ENCODE measurements at regions of chr4 and their contacts with region 1.

Region 1: DNA sequence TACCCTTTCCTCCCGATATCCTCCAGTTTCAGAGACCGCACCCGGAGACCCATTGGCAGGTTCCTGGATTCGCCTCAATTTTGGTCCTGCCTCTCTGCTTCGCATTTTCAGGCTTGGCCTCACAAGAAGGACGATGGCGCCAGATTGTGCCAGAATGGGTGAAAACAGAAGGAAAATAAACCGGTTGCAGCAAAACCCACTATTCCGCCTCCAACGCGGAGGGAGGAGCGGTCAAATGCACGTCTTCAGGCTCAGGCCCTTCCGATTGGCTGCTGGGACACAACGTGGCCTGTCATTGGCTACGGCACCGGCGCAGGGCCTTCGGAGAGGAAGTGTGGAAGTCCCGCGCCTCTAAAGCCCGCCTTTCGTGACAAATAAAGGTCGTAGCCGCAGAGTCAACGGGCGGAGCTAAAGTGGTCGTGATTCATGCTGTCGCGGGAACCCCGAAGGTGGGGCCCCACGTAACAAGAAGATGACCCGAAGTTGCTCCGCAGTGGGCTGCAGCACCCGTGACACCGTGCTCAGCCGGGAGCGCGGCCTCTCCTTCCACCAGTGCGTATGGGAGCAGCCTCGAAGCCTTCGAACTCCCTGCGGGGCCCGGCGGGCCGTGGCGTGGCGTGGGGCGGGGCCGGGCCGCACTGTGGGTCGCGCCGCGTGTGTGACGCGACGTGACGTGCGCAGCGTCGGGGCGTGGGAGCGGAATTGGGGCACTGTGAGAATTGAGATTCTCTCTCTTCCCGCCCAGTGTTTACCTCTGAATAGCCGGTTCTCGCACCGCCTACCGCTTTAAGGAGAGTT is at the start of gene THAP9:
- DNase-seq: peak; percentile 97 to 99
- H3K4me3 ChIP-seq: peak within 1 kb of the TSS; percentile 69 to 78
- H3K27ac ChIP-seq: peak within 1 kb of the TSS; percentile 98
- H3K4me1 ChIP-seq: peaks cover 0 to 20% of the 10 kb centered on the region in 2 donors
- H3K27me3 ChIP-seq: no peaks in the 10 kb centered on the region
- CTCF ChIP-seq: no peak
- total RNA-seq, gene THAP9: 0.32 TPM

Region 2: DNA sequence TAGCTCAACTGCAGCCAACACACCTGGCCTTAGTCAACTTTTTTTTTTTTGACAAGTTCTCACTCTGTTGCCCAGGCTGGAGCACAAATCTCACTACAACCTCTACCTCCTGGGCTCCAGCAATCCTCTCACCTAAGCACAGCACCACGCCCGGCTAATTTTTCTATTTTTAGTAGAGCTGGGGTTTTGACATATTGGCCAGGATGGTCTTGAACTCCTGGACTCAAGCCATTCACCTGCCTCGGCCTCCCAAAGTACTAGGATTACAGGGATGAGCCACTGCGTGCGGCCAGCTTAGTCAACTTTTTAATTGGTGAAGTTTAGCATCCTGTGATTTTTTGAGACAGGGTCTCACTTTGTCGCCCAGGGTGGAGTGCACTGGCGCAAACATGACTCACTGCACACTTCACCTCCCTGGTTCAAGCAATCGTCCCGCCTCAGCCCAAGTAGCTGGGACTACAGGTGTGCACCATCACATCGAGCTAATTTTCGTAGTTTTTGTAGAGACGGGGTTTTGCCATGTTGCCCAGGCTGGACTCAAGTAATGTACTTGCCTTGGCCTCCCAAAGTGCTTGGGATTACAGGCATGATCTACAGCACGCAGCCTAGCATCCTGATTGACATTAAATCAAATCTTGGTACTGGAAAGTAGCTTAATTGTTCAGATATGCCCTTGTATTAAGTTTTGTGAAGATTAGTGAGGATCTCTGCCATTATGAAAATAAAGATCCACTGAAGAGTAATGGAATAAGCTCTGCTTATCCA is 478.6 kb before region 1 on chr4:
- intact Hi-C with region 1: no loop called
- DNase-seq: no peak
- H3K4me3 ChIP-seq: no peak overlapping the region
- H3K27ac ChIP-seq: no peak overlapping the region
- H3K4me1 ChIP-seq: peaks cover 0 to 10% of the 10 kb centered on the region in 2 donors
- H3K27me3 ChIP-seq: no peaks in the 10 kb centered on the region
- CTCF ChIP-seq: no peak

Region 3: DNA sequence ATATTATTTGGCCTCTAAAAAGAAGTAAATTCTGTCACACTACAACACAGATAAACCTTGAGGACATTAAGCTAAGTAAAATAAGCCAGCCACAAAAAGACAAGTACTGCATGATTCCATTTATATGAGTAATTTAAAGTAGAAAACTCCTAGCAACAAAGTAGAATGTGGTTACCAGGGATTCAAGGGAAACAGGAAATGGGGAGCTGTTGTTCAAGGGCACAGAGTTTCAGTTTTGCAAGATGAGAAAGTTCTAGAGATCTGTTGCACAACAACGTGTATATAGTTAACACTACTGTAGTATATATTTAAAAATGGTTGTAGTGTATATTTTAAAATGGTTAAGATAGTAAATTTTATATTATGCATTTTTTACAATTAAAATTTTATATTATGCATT is 34.9 kb before region 1 on chr4:
- intact Hi-C with region 1: loop called (anchors 5 kb)
- DNase-seq: no peak
- H3K4me3 ChIP-seq: no peak overlapping the region
- H3K27ac ChIP-seq: peak overlapping the region; percentile 50 to 75
- H3K4me1 ChIP-seq: peaks cover 4 to 11% of the 10 kb centered on the region in 2 donors
- H3K27me3 ChIP-seq: no peaks in the 10 kb centered on the region
- CTCF ChIP-seq: no peak

Region 4: DNA sequence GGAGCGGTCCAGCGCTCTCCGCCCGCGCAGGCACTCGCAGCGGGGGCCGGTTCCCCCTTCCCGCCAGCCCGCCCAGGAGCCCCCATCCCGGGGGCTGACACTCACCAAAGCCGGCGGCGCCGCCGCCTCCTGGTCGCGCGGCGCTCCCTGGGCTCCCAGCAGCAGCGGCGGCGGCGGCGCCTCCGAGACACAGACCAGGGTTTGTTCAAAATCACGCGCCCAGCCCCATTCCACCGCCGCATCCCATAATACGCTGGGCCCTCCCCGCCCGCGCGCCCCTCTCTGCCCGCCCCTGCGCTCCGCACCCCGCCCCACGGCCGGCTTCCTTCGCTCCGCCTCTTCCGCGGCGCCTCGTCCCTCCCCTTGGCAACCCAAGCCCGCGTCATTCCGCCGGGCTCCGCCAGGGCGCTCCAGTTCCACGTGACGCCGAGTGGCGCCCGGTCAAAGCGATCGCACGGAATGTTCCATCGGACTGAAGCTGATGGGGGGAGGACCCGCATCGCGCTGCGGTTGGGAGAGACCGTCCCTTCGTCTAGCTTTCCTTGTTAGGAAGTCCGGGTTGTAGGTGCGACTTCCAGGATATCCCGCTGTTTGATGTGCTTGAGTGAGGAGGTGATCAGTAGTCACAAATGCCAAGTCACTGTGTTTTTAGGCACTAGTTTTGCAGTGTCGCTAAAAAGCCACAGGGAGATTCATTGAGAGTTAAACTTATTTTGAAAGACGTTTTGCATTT is 112.3 kb after region 1 on chr4:
- intact Hi-C with region 1: loop called (anchors 2 kb)
- DNase-seq: peak; percentile 75 to 97
- H3K4me3 ChIP-seq: peak overlapping the region; percentile 78 to 88
- H3K27ac ChIP-seq: peak overlapping the region; percentile 71 to 89
- H3K4me1 ChIP-seq: peaks cover 0 to 19% of the 10 kb centered on the region in 2 donors
- H3K27me3 ChIP-seq: no peaks in the 10 kb centered on the region
- CTCF ChIP-seq: peak; percentile 60 to 70 (median 63)

Region 5: GRCh38 chr4:83034630-83035494 is 134.3 kb after region 1 on chr4 and contains the start of gene COPS4:
- intact Hi-C with region 1: loop called (anchors 2 kb)
- DNase-seq: peak; percentile 95 to 99
- H3K4me3 ChIP-seq: peak within 1 kb of the TSS; percentile 76 to 79
- H3K27ac ChIP-seq: peak within 1 kb of the TSS; percentile 92 to 94
- H3K4me1 ChIP-seq: peaks cover 0 to 16% of the 10 kb centered on the region in 2 donors
- H3K27me3 ChIP-seq: no peaks in the 10 kb centered on the region
- CTCF ChIP-seq: peak; percentile 15 to 59 (median 43)
- total RNA-seq, gene COPS4: 83.5 TPM

Region 6: GRCh38 chr4:83255584-83255983 is 355.1 kb after region 1 on chr4:
- intact Hi-C with region 1: loop called (anchors 5 kb)
- DNase-seq: no peak
- H3K4me3 ChIP-seq: no peak overlapping the region
- H3K27ac ChIP-seq: no peak overlapping the region
- H3K4me1 ChIP-seq: peaks cover 0 to 7% of the 10 kb centered on the region in 2 donors
- H3K27me3 ChIP-seq: no peaks in the 10 kb centered on the region
- CTCF ChIP-seq: no peak

Region 7: GRCh38 chr4:83455281-83456129 is 555.0 kb after region 1 on chr4 and contains the starts of genes HELQ and MRPS18C:
- intact Hi-C with region 1: loop called (anchors 1 kb)
- DNase-seq: peak; percentile 94 to 99
- H3K4me3 ChIP-seq: peak within 1 kb of the TSS; percentile 85 to 89
- H3K27ac ChIP-seq: peak within 1 kb of the TSS; percentile 98 to 99
- H3K4me1 ChIP-seq: peaks cover 0 to 14% of the 10 kb centered on the region in 2 donors
- H3K27me3 ChIP-seq: no peaks in the 10 kb centered on the region
- CTCF ChIP-seq: peak in 2 of 3 experiments; percentile 26 to 42
- total RNA-seq, gene HELQ: 1.1 TPM
- total RNA-seq, gene MRPS18C: 13.0 TPM